Activated naive CD4-positive, alpha-beta T cell treated with anti-CD3 and anti-CD28 coated beads for 36 hours (primary cell): ENCODE measurements at regions of chr1 and their contacts with region 1.

Region 1: GRCh38 chr1:19661721-19662228 is 2.9 kb upstream of the HTR6 start:
- DNase-seq: peak; percentile 69
- H3K4me3 Mint-ChIP-seq: no peak overlapping the region
- H3K27ac Mint-ChIP-seq: no peak overlapping the region
- H3K4me1 Mint-ChIP-seq: peaks cover 21% of the 10 kb centered on the region
- H3K27me3 Mint-ChIP-seq: peaks cover 20% of the 10 kb centered on the region

Region 2: DNA sequence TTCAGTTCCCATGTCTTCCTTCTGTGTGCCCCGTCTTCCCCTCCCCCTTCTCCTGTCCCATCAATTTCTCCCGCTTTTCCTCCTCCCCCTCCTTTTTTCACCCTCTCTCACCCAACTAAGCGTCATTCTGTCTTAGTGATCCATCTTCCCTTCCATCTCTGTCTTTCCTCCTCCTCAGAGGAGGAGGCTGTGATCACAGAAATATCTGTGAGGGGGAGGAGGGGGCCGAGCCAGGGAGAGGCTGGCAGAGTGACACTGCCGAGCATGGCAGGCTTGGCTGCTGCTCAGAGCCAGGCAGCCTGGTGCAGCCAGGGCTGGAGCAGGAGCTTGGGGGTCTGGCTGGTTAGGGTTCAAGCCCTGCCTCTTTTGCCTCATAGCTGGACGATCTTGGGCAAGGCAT is 10.5 kb after region 1 on chr1:
- CTCF ChIA-PET with region 1: interaction called, 31 read pairs
- intact Hi-C with region 1: no loop called
- DNase-seq: no peak
- H3K4me3 Mint-ChIP-seq: no peak overlapping the region
- H3K27ac Mint-ChIP-seq: no peak overlapping the region
- H3K4me1 Mint-ChIP-seq: peaks cover 4% of the 10 kb centered on the region
- H3K27me3 Mint-ChIP-seq: peaks cover 6% of the 10 kb centered on the region

Region 3: GRCh38 chr1:19704247-19705113 is 42.7 kb after region 1 on chr1:
- CTCF ChIA-PET with region 1: interaction called, 215 read pairs
- intact Hi-C with region 1: loop called (anchors 1 kb)
- DNase-seq: peak; percentile 68
- H3K4me3 Mint-ChIP-seq: no peak overlapping the region
- H3K27ac Mint-ChIP-seq: no peak overlapping the region
- H3K4me1 Mint-ChIP-seq: peaks cover 14% of the 10 kb centered on the region
- H3K27me3 Mint-ChIP-seq: no peaks in the 10 kb centered on the region

Region 4: GRCh38 chr1:19762175-19762779 is 100.5 kb after region 1 on chr1:
- CTCF ChIA-PET with region 1: interaction called, 11 read pairs
- intact Hi-C with region 1: loop called (anchors 5 kb)
- DNase-seq: peak; percentile 52
- H3K4me3 Mint-ChIP-seq: no peak overlapping the region
- H3K27ac Mint-ChIP-seq: no peak overlapping the region
- H3K4me1 Mint-ChIP-seq: peaks cover 16% of the 10 kb centered on the region
- H3K27me3 Mint-ChIP-seq: no peaks in the 10 kb centered on the region

Region 5: GRCh38 chr1:19811206-19811851 is 149.6 kb after region 1 on chr1:
- CTCF ChIA-PET with region 1: interaction called, 13 read pairs
- intact Hi-C with region 1: loop called (anchors 1 kb)
- DNase-seq: peak; percentile 74
- H3K4me3 Mint-ChIP-seq: no peak overlapping the region
- H3K27ac Mint-ChIP-seq: no peak overlapping the region
- H3K4me1 Mint-ChIP-seq: no peaks in the 10 kb centered on the region
- H3K27me3 Mint-ChIP-seq: no peaks in the 10 kb centered on the region

Region 6: DNA sequence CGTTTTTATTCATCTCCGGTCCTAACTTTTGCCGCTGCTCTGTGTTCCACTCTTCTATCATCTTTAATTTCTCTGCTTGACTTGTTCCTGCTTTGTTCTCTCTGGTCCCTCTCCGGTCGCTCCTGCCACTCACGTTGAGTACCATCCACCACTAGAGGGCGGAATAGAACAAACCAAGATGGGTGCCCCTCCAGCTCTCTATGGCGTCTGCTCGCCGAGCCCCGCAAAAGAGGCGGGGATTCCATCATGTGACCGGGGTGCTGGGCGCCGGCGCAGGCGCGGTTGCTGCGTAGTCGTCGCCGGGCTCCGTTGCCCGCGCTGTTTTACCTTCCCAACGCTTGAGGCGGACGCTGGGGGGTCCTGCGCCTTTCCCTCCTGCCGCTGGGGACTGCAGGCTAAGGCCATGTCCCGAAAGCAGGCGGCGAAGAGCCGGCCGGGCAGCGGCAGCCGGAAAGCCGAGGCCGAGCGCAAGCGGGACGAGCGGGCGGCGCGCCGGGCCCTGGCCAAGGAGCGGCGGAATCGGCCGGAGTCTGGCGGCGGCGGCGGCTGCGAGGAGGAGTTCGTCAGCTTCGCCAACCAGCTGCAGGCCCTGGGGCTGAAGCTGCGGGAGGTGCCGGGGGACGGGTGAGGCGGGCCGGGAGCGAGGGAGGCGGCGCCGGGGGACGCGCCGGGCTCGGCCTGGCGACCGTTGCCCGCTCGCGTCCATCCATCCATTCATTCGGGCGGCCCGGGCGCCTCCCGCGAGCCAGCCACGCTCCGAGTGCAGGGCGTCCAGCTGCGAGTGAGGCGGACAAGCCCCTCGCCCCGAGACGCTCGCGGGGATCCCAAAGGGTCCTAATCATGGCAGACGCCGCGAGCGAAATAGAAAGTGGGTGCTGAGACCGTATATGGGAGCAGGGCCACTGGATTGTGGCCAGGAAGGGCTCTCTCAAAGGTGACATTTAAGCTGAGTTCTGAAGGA is 220.6 kb after region 1 on chr1 and contains the start of gene OTUD3:
- CTCF ChIA-PET with region 1: interaction called, 3 read pairs
- intact Hi-C with region 1: loop called (anchors 1 kb)
- DNase-seq: peak; percentile 96
- H3K4me3 Mint-ChIP-seq: peak within 1 kb of the TSS; percentile 83
- H3K27ac Mint-ChIP-seq: peak within 1 kb of the TSS; percentile 42
- H3K4me1 Mint-ChIP-seq: peaks cover 37% of the 10 kb centered on the region
- H3K27me3 Mint-ChIP-seq: no peaks in the 10 kb centered on the region
- total RNA-seq, gene OTUD3: 8.3 to 10.8 TPM